ENCODE measurements at regions of chr19 and their contacts with region 1.

Region 1: DNA sequence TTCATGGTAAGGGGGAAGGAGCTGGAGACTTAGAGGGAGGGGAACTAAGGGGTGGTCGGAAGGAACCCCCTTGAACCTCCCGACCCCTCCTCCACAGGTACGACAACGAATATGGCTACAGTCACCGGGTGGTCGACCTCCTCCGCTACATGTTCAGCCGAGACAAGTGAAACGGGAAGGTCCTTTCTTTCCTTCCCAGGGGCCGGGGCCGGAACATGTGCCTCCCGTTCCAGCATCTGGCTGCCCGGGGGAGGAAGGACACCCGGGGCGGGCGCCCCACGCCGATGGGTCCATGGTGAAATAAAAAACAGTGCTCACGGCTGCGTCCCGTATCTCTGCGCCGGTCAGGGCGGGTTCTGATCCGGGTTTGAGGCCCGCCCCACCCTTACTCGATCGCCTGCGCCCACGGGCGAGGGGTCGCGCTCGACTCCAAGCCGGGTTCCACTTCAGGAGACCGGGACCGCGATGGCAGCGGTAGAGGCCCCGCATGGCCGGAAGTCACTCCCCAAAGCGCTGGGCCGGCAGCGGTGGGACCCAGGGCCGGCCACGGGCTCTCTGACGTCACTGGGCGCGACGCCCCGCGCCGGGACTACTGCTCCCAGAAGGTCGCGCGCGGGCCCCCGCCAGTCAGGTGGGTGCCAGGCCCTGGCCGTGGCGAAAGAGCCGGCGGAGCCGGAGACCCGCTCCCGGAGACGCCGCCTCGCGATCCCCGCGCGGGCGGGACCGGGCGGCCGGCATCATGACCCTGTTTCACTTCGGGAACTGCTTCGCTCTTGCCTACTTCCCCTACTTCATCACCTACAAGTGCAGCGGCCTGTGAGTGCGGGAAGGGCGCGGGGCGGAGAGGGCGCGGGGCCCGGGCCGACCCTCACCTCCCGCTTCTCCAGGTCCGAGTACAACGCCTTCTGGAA is at the start of gene TMEM147:
- DNase-seq: peak; percentile 95 to 100
- ATAC-seq: peak; percentile 88 to 95
- H3K4me3 ChIP-seq: peak within 1 kb of the TSS; percentile 86
- H3K27ac ChIP-seq: peak within 1 kb of the TSS; percentile 88 to 93
- H3K4me1 ChIP-seq: peaks cover 14% of the 10 kb centered on the region
- CTCF ChIP-seq: no peak
- EP300 ChIP-seq: no peak
- POLR2A ChIP-seq: peak; percentile 95
- RAD21 ChIP-seq: no peak
- polyA plus RNA-seq, gene TMEM147: 335 and 446 TPM in 2 replicates

Region 2: GRCh38 chr19:35458731-35459391 is 86.4 kb before region 1 on chr19:
- CTCF ChIA-PET with region 1: no interaction called
- POLR2A ChIA-PET with region 1: no interaction called
- DNase-seq: peak in 1 of 2 experiments; percentile 52
- ATAC-seq: peak; percentile 21 to 77; a peak in 3 of 6 replicates
- H3K4me3 ChIP-seq: no peak overlapping the region
- H3K27ac ChIP-seq: peak overlapping the region; percentile 19 to 51; a peak in 3 of 6 replicates
- H3K4me1 ChIP-seq: peaks cover 17% of the 10 kb centered on the region
- CTCF ChIP-seq: no peak
- EP300 ChIP-seq: no peak
- POLR2A ChIP-seq: no peak
- RAD21 ChIP-seq: no peak

Region 3: DNA sequence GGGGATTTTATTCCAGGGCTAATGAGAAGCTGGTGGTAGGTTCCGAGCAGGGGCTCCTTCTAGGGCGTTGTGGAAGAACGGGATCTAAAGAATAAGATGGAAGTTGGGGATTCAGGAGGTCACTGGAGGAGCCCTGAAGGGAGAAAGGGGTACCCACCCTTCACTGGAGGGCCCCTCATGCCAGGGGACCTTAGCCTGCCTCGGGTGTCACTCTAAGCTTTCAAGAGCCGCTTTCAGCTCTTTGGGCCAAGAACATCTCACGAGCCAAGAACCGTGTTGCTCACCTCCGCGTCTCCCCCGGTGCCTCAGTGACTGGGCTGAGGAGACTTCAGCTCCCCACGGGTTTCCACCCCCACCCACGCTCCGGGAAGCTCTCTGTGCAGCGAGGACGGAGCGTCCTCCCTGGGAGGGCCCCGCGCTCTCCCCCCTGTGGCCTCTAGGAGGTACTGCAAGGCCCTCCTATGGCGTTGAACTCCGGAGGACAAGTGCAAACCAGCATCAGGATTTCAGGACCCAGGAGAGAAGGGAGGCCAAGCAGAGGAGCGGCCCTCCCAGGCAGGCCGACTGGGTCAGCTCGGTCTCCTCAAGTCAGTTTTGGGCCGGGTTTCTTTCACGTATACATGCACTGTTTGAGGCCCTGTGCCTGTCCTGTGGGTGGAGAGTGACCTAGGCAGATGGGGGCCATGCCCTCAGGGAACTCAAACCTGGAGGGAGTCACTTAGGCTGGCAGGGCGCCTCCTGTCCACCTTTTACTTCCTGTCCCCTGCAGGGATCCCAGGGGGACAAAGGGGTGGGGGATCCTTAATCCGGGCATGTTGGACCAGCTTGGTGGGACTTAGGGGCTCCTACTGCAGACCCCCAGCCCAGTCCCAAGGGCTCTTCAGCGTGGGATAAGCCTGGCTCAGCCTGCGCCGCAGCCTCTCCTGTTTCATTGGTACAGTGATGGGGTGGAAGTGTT is 49.9 kb before region 1 on chr19:
- CTCF ChIA-PET with region 1: interaction called, 19 read pairs
- POLR2A ChIA-PET with region 1: no interaction called
- DNase-seq: peak; percentile 81 to 97
- ATAC-seq: peak; percentile 90 to 95
- H3K4me3 ChIP-seq: peak overlapping the region; percentile 24; the same call in 2 of the 3 replicates
- H3K27ac ChIP-seq: peak overlapping the region; percentile 35 to 64; a peak in 3 of 6 replicates
- H3K4me1 ChIP-seq: no peaks in the 10 kb centered on the region; the same call in 2 of the 3 replicates
- CTCF ChIP-seq: peak; percentile 96
- EP300 ChIP-seq: no peak
- POLR2A ChIP-seq: no peak
- RAD21 ChIP-seq: peak; percentile 83 to 85

Region 4: DNA sequence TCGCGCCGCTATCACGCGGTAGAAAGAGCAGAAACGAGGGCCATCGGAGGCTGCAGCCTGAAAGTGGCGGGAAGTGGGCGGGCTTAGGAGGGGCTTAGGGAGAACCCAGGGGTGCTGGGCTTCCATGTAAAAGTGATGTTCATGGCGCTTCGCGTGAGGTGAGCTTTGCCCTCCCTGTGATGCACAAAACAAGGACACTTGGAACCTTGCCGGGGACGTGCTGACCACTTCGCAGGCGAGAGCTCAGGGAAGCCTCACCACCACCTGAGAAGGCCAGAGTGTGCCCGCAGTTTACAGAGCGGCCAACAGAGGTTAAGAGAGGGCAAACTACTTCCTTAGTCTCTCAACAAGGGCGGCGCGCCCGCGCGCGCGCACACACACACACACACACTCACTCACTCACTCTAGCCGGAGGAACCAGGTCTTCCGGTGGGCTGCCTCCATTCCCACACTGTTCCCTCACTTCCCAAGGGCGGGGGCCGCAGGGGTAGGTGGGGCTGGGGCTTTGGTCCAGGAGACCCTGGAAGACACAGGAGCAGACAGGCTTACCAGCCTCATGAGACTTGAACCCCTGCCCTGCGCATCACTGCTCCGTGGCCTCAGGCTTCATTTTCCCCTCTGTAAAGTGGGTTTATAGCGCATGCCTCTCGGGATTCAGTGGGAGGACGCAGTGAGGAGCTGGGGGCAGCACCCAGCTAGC is 11.3 kb before region 1 on chr19:
- CTCF ChIA-PET with region 1: interaction called, 31 read pairs
- POLR2A ChIA-PET with region 1: interaction called, 3 read pairs
- DNase-seq: peak in 1 of 2 experiments; percentile 73
- ATAC-seq: peak; percentile 66 to 76
- H3K4me3 ChIP-seq: no peak overlapping the region
- H3K27ac ChIP-seq: 0 out of 6 replicates have a peak overlapping the region, but pooled peaks of 1 of the 2 experiments have one; percentile 4
- H3K4me1 ChIP-seq: peaks cover 11% of the 10 kb centered on the region
- CTCF ChIP-seq: no peak
- EP300 ChIP-seq: no peak
- POLR2A ChIP-seq: no peak
- RAD21 ChIP-seq: no peak

Region 5: GRCh38 chr19:35585848-35586247 is 40.6 kb after region 1 on chr19 and contains the start of gene PMIS2:
- CTCF ChIA-PET with region 1: interaction called, 26 read pairs
- POLR2A ChIA-PET with region 1: interaction called, 3 read pairs
- DNase-seq: peak; percentile 37 to 60
- ATAC-seq: peak in 1 of 2 experiments; percentile 76; a peak in 3 of 6 replicates
- H3K4me3 ChIP-seq: no peak within 1 kb of the TSS
- H3K27ac ChIP-seq: no peak within 1 kb of the TSS
- H3K4me1 ChIP-seq: no peaks in the 10 kb centered on the region
- CTCF ChIP-seq: no peak
- EP300 ChIP-seq: no peak
- POLR2A ChIP-seq: no peak
- RAD21 ChIP-seq: no peak
- polyA plus RNA-seq, gene PMIS2: not detected in 2 replicates

Region 6: DNA sequence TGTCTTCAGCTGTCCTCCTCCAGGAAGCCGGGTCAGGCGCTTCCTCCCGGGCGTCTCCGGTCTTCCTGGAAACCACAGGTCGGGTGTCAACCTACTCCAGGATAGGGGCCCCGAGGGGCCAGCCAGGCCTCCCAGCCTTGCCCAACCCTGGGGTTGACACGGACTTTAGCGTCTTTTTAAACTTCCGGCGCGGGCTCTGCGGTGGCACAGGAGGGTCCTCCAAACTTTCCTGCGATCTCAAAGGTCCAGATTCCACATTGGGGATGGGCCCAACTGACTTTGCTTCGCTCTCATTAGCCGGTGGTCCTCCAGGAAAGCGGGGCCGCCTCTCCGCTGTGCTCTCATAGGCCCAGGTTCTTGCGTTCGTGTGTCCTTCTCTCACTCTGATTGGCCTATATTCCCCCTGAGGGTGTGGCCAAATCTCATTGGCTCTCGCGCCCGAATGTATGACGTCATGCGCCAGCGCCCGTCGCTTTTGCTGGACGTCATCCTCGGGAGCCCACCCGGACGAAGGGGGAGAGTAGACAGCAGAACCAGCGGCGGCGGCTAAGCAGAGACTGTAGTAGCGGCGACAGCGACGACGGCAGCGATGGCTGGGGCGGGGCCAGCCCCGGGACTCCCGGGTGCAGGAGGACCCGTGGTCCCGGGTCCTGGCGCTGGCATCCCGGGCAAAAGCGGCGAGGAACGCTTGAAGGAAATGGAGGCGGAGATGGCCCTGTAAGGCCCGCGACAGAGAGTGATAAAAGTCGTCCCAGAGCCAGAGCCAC is 83.5 kb after region 1 on chr19 and contains the start of gene RBM42:
- CTCF ChIA-PET with region 1: interaction called, 27 read pairs
- POLR2A ChIA-PET with region 1: no interaction called
- DNase-seq: peak; percentile 100
- ATAC-seq: peak; percentile 99 to 100
- H3K4me3 ChIP-seq: peak within 1 kb of the TSS; percentile 79
- H3K27ac ChIP-seq: peak within 1 kb of the TSS; percentile 86 to 89
- H3K4me1 ChIP-seq: peaks cover 14% of the 10 kb centered on the region; the same call in 2 of the 3 replicates
- CTCF ChIP-seq: no peak
- EP300 ChIP-seq: no peak
- POLR2A ChIP-seq: peak; percentile 57
- RAD21 ChIP-seq: no peak
- polyA plus RNA-seq, gene RBM42: 62.1 and 80.4 TPM in 2 replicates

Region 7: DNA sequence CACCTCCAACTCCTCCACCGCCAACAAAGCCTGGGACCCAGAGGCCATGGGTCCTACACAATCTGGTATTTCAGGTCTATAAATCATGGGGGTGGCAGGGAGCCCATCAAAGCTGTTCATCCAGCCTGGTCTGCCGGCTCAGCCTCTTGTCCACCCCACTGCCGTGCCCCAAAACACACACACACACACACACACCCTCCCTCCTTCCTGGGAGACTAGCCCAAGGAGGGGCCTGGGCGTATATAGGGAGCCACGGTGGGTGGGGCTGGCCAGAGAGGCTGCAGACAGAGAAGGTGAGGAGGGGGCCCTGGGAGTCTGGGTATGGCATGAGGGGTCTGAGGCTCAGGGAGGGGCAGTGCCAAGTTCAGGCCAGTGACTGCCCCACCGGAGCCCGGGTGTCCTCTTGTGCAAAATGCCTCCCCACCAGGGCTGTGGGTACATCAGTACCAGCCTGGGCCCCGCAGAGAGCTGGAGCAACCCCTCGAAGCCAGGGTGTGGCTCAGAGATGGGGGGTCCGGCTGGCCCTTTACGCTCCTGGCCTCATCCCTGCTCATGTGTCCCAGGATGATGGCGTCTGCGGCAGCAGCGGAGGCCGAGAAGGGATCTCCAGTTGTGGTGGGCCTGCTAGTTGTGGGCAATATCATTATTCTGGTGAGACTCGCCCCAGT is 121.1 kb after region 1 on chr19 and contains the start of gene UPK1A:
- CTCF ChIA-PET with region 1: interaction called, 21 read pairs
- POLR2A ChIA-PET with region 1: no interaction called
- DNase-seq: no peak
- ATAC-seq: peak; percentile 16 to 19; a peak in 3 of 6 replicates
- H3K4me3 ChIP-seq: no peak within 1 kb of the TSS
- H3K27ac ChIP-seq: no peak within 1 kb of the TSS
- H3K4me1 ChIP-seq: no peaks in the 10 kb centered on the region
- CTCF ChIP-seq: no peak
- EP300 ChIP-seq: no peak
- POLR2A ChIP-seq: no peak
- RAD21 ChIP-seq: no peak
- polyA plus RNA-seq, gene UPK1A: 0.78 and 1.4 TPM in 2 replicates